HepG2 (cell line): ENCODE measurements at regions of chr3 and their contacts with region 1.

Region 1: GRCh38 chr3:190811775-190812480 is 50.6 kb downstream of the GMNC start:
- DNase-seq: peak; percentile 54
- ATAC-seq: peak; percentile 91
- H3K4me3 ChIP-seq: peak overlapping the region in 2 of 3 experiments; percentile 20 to 32; a peak in 2 of 6 replicates
- H3K27ac ChIP-seq: no peak overlapping the region
- H3K4me1 ChIP-seq: peaks cover 12% of the 10 kb centered on the region
- H3K27me3 ChIP-seq: no peaks in the 10 kb centered on the region
- CTCF ChIP-seq: peak; percentile 74
- EP300 ChIP-seq: no peak
- POLR2A ChIP-seq: no peak
- RAD21 ChIP-seq: no peak

Region 2: DNA sequence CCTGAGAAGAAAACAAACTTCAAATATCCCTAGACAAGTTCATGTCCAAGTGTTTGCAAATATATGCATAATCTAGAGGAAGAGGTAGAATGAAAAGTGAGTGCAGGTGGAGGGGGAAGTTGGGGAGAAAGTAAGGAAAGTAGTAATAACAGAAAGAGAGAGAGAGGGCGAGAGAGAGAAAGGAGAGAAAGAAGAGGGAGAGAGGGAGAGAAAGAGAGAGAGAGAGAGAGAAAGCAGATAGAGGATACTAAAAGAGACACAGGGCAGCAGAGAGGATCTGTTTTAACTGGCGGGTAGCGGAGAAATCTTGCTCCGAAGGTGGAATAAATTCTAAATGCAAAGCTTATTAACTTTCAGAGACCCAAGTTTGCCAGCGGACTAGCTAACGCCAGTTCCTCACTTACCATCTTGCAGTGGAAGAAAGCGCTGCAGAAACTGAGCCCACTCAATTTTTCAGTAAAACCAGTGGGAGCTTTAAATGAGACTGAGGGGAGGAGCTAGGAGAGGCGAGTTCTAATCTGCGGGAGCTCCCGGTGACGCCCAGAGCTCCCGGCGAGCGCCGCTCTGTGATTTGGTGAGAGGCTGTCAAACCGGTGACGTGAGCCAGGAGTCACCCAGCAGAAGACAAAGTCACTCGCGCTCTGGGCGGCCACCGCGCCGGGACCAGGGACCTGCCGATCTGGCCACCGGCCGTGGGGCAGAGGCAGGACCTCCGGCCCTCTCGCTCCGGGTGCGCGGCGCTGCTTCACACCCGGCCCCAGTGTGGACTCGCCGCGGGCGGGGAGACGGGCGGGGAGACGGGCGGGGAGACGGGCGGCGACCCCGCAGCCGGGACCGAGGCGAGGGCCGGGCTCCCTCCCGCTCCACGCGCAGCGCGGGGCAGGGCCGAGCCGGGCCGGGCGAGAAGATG is 50.5 kb after region 1 on chr3 and contains the start of gene GMNC:
- CTCF ChIA-PET with region 1: no interaction called
- POLR2A ChIA-PET with region 1: no interaction called
- in situ Hi-C with region 1: no loop called
- intact Hi-C with region 1: loop called (anchors 5 kb)
- DNase-seq: peak; percentile 38
- ATAC-seq: peak; percentile 96
- H3K4me3 ChIP-seq: peak within 1 kb of the TSS; percentile 43 to 64 (median 57); a peak in 5 of 6 replicates
- H3K27ac ChIP-seq: no peak within 1 kb of the TSS
- H3K4me1 ChIP-seq: peaks cover 25% of the 10 kb centered on the region
- H3K27me3 ChIP-seq: peaks cover 0 to 4% of the 10 kb centered on the region in 2 experiments; a peak in 2 of 5 replicates
- CTCF ChIP-seq: no peak
- EP300 ChIP-seq: no peak
- POLR2A ChIP-seq: no peak
- RAD21 ChIP-seq: no peak
- total RNA-seq, gene GMNC: not detected in 2 replicates

Region 3: DNA sequence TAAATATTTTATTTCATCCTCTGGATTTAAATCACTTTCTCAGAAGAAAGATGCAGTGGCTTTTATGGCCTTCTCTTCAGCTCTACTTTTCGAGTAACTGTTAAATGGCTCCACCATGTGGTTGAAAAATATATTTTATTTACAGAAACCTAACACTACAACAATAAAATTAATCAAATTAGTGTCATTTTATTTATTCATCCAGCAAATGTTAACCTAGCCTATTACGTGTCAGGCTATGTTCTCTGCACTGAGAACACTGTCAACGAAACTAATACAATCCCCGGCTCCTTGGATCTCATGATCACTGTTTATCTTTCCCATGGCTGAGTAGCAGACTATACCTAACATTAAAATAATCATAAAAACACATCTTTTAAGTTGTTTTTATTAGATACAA is 239.1 kb after region 1 on chr3:
- CTCF ChIA-PET with region 1: interaction called, 16 read pairs
- POLR2A ChIA-PET with region 1: no interaction called
- in situ Hi-C with region 1: no loop called
- intact Hi-C with region 1: loop called (anchors 1 kb)
- DNase-seq: peak; percentile 9
- ATAC-seq: peak; percentile 55; the same call in 2 of the 3 replicates
- H3K4me3 ChIP-seq: no peak overlapping the region
- H3K27ac ChIP-seq: no peak overlapping the region
- H3K4me1 ChIP-seq: no peaks in the 10 kb centered on the region
- H3K27me3 ChIP-seq: no peaks in the 10 kb centered on the region
- CTCF ChIP-seq: peak; percentile 51; the same call in 1 of the 2 replicates
- EP300 ChIP-seq: no peak
- POLR2A ChIP-seq: no peak
- RAD21 ChIP-seq: no peak